ENCODE measurements at regions of chr10 and their contacts with region 1.

Region 1: GRCh38 chr10:77173615-77174461 is 463.8 kb downstream of the KCNMA1 start:
- DNase-seq: peak; percentile 79

Region 2: GRCh38 chr10:77104459-77104980 is 69.3 kb before region 1 on chr10:
- CTCF ChIA-PET with region 1: no interaction called
- POLR2A ChIA-PET with region 1: no interaction called
- DNase-seq: no peak

Region 3: GRCh38 chr10:77261146-77261545 is 87.3 kb after region 1 on chr10:
- CTCF ChIA-PET with region 1: no interaction called
- POLR2A ChIA-PET with region 1: no interaction called
- DNase-seq: no peak

Region 4: DNA sequence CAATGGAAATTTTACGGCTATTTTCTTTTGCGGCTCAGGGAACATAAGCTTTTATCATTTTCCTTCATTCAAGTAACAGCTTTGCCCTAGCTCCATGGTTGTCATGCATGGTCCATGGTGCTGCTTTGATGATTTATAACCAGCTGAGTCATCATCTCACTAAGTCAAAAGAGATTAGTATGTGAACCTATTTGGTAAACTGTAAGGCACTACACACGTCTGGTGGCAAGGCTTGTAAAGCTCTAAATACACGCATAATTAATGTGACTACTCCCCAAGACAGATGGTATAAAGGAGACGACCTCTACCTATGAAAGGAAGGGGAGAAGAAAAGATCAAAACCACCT is 123.5 kb after region 1 on chr10:
- CTCF ChIA-PET with region 1: interaction called, 11 read pairs
- POLR2A ChIA-PET with region 1: no interaction called
- DNase-seq: no peak

Region 5: GRCh38 chr10:77641788-77642397 is 468.1 kb after region 1 on chr10:
- CTCF ChIA-PET with region 1: interaction called, 24 read pairs
- POLR2A ChIA-PET with region 1: no interaction called
- DNase-seq: peak; percentile 59

Measured in HEK293T (cell line).